Aorta (tissue), 5 donors: ENCODE measurements at regions of chr7 and their contacts with region 1.

Region 1: GRCh38 chr7:11858622-11859302 is 26.8 kb upstream of the THSD7A start:
- DNase-seq: no peak
- ATAC-seq: no peak
- H3K4me3 ChIP-seq: no peak overlapping the region
- H3K27ac ChIP-seq: no peak overlapping the region
- H3K4me1 ChIP-seq: no peaks in the 10 kb centered on the region
- H3K27me3 ChIP-seq: no peaks in the 10 kb centered on the region

Region 2: DNA sequence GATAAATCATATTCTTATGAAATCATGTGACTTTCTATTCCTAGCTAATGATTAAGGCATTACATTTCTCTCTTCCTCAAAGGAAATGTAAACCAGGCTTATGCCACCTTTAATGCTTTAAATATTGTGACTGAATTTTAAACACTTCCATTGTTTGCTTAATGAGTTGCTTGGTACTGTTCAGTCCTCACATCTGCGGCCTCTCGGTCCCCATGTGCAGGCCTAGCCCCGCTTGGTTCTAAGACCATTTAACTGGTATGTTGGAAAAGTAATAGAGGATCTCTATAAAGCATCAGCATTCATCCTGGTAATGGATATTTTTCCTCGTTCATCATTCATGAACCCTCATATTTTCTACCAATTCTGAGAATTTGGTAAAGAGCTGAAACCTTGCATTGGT is 54.1 kb before region 1 on chr7:
- intact Hi-C with region 1: loop called in 1 of 2 experiments (anchors 10 kb)
- DNase-seq: no peak
- ATAC-seq: no peak
- H3K4me3 ChIP-seq: no peak overlapping the region
- H3K27ac ChIP-seq: no peak overlapping the region
- H3K4me1 ChIP-seq: no peaks in the 10 kb centered on the region
- H3K27me3 ChIP-seq: no peaks in the 10 kb centered on the region